ENCODE measurements at regions of chr1 and their contacts with region 1.

Region 1: DNA sequence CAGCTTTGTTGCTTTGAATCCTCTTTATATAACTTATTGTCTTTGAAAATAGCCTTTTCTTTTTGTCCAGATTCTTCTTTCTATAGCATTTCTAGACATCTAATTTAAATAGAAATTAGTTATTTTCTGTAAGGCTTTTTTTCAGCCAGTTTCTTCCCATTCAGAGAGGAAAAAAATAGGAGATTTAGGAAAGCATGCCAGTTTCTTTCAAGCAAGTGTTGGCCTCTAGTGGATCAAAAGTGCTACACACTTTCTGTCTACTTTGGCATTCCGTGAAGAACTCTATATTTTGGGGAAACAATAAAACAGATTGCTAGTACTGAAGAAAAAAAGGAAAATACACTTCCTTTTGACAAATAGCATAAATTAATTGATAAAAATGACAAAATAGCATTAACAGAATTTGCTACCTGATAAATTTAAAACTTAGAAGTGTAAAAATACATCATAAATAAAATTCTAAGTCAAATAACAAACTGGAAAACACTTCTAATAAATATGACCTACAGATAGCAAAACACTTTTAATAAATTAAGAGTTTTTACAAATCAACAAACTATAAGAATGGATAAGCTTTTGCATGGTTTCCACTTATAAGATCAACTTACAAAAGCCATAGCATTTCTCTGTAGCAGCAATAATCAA is 13.1 kb upstream of the EXO1 start:
- DNase-seq: no peak
- H3K4me3 ChIP-seq: no peak overlapping the region
- H3K27ac ChIP-seq: no peak overlapping the region
- H3K4me1 ChIP-seq: peaks cover 11% of the 10 kb centered on the region
- H3K27me3 ChIP-seq: no peaks in the 10 kb centered on the region
- CTCF ChIP-seq: peak; percentile 76 to 82

Region 2: DNA sequence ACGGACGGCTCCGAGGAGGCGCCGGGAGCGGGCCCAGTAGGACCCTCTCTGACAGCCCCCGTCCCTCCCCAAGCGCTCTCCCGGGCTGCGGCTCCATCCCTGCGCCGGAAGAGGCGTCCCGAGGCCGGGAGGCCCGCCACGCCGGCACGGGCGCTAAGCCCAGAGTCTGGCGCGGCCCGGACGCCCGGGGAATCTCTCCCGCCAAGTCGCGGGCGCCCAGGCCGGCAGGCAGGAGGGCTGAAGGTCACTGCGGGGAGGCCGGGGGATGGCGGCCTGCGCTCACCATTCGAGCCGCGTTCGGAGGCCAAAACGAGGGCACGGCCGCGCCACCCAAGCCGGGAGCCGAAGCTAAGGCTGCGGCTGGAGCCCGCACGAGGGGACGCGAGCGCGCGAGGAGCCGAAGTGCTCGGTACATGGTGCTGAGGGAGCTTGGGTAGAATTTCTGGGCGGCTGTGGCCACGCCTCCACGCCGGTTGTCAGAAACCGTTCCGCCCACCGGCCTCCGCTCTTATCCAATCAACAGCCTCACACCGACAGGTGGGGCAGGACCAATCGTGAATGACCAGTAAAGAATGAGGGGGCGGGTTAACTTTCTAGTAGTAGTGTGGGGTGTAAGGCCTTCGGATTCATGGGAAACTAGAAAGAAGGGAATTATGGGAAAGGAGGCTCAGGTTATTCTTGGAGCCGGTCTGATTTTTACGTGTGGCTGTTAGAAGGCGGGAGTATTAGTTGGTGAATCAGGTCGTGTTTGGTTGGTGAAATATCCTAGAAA is 315.4 kb before region 1 on chr1 and contains the start of gene FH:
- CTCF ChIA-PET with region 1: no interaction called
- dilution Hi-C with region 1: no loop called
- in situ Hi-C with region 1: loop called in 1 of 2 experiments (anchors 10 kb)
- intact Hi-C with region 1: no loop called
- DNase-seq: peak; percentile 99
- H3K4me3 ChIP-seq: peak within 1 kb of the TSS; percentile 72 to 98 (median 92)
- H3K27ac ChIP-seq: peak within 1 kb of the TSS; percentile 82
- H3K4me1 ChIP-seq: no peaks in the 10 kb centered on the region
- H3K27me3 ChIP-seq: no peaks in the 10 kb centered on the region
- CTCF ChIP-seq: no peak
- total RNA-seq, gene FH: 89.9 to 95.8 TPM

Region 3: GRCh38 chr1:241525026-241525425 is 309.8 kb before region 1 on chr1:
- CTCF ChIA-PET with region 1: no interaction called
- dilution Hi-C with region 1: no loop called
- in situ Hi-C with region 1: loop called (anchors 5 to 10 kb)
- intact Hi-C with region 1: no loop called
- DNase-seq: no peak
- H3K4me3 ChIP-seq: no peak overlapping the region
- H3K27ac ChIP-seq: no peak overlapping the region
- H3K4me1 ChIP-seq: no peaks in the 10 kb centered on the region
- H3K27me3 ChIP-seq: no peaks in the 10 kb centered on the region
- CTCF ChIP-seq: no peak

Region 4: DNA sequence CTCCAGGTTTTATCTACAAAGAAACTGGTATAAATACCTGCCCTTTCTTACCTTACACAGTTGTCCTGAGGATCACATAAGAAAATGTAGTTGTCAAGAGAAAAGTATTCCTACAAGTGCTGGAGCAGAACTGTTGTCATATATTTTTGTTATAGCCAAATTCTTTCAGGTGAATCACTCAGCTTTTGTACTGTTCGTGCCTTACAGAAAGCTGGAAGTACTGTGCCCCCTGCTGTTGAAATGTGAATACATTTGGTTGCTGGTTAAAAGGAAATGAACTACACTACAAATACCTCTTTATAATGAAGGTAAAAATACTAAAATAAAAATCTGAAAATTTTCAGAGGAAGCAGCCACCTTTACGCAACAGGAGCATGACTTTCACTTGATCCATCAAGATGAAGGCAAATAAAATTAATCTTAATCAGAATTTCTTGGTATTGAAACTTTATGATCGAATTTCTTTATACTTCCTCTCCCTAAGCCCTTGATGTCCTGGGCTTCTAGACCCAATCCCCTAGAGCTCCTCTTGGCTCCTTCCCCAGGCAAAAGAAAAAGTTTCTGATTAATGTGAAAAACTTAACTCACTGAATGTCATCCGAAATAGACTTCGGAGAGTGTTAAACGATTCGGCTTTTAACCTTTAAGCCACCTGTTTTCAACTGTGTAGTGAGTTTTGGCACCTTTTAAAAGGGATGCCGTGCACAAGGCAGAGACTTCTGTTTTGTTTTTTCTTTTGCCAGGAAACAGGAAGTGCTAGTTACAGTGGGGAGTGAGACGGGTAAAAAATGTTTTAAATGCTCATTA is 207.2 kb before region 1 on chr1:
- CTCF ChIA-PET with region 1: no interaction called
- dilution Hi-C with region 1: no loop called
- in situ Hi-C with region 1: loop called in 1 of 2 experiments (anchors 10 kb)
- intact Hi-C with region 1: loop called (anchors 1 kb)
- DNase-seq: peak; percentile 70
- H3K4me3 ChIP-seq: no peak overlapping the region
- H3K27ac ChIP-seq: no peak overlapping the region
- H3K4me1 ChIP-seq: no peaks in the 10 kb centered on the region
- H3K27me3 ChIP-seq: no peaks in the 10 kb centered on the region
- CTCF ChIP-seq: peak; percentile 68 to 75

Region 5: DNA sequence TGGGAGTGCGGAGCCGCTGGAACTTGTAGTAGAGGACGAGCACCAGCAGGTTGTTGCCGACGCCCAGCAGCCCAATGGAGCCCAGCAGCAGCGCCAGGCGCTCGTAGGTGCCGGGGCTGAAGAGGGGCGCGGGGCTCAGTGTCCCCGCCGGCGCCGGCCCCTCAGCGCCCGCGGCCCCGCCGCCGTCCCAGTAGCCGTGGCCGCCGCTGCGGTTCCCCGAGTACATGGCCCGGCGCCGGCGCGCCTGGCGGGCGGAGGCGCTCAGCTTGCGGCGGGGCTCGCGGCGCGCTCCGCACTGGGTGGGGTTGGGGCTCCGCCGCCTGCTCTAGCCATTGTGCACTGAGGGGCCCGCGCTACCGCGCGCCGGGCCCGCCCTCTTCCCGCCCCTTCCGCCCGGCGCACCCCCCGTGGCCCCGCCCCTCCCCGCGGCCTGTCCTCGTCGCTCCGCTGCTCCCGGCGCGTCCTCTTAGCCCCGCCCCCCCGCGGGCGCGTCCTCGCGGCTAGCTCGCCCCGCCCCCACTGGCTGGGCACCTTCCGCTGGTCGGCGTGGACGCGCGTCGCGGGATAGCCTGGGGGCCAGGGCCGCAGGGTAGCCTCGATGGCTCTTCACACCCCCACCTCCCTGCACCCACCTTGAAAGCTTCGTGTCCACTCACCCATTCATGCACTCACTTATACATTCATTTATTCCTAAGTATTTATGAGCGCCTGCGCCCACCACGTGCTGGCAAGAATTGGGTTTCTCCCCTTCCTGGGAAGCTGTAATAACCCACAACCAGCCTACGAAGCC is 194.6 kb before region 1 on chr1 and contains the starts of genes CHML and OPN3:
- CTCF ChIA-PET with region 1: no interaction called
- dilution Hi-C with region 1: no loop called
- in situ Hi-C with region 1: no loop called
- intact Hi-C with region 1: loop called (anchors 1 kb)
- DNase-seq: peak; percentile 83
- H3K4me3 ChIP-seq: peak within 1 kb of the TSS; percentile 91 to 99 (median 99)
- H3K27ac ChIP-seq: peak within 1 kb of the TSS; percentile 76
- H3K4me1 ChIP-seq: peaks cover 22% of the 10 kb centered on the region
- H3K27me3 ChIP-seq: no peaks in the 10 kb centered on the region
- CTCF ChIP-seq: peak in 1 of 2 donors; percentile 17
- total RNA-seq, gene CHML: 15.0 to 25.3 TPM
- total RNA-seq, gene OPN3: 21.3 to 36.5 TPM

Region 6: GRCh38 chr1:242033447-242033846 is 198.6 kb after region 1 on chr1:
- CTCF ChIA-PET with region 1: no interaction called
- dilution Hi-C with region 1: no loop called
- in situ Hi-C with region 1: no loop called
- intact Hi-C with region 1: no loop called
- DNase-seq: no peak
- H3K4me3 ChIP-seq: no peak overlapping the region
- H3K27ac ChIP-seq: no peak overlapping the region
- H3K4me1 ChIP-seq: no peaks in the 10 kb centered on the region
- H3K27me3 ChIP-seq: no peaks in the 10 kb centered on the region
- CTCF ChIP-seq: no peak

Region 7: DNA sequence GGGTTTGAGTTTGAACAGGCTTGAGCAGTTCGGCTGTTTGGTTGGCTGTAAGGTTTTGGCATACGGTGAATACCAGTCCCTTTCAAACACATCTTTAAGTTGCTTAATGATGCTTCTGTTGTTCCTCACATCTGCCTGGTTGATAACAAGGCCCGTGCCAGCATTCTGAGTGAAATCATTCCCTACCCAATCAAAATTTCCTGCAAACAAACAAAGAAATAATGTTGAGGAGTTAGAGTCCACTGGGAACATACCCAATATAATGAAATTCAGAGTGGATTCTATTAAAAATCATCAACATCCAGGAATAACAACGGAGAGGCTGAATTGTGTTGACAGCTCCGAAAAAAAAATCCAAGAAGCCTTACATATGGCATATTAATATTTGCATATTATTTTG is 255.1 kb after region 1 on chr1:
- CTCF ChIA-PET with region 1: no interaction called
- dilution Hi-C with region 1: no loop called
- in situ Hi-C with region 1: no loop called
- intact Hi-C with region 1: no loop called
- DNase-seq: no peak
- H3K4me3 ChIP-seq: no peak overlapping the region
- H3K27ac ChIP-seq: no peak overlapping the region
- H3K4me1 ChIP-seq: no peaks in the 10 kb centered on the region
- H3K27me3 ChIP-seq: no peaks in the 10 kb centered on the region
- CTCF ChIP-seq: no peak